Activated CD4-positive, alpha-beta T cell treated with anti-CD3 and anti-CD28 coated beads, Interleukin-2, amount 10 ng/mL, durations not matched to agents 24 days and 14 days (primary cell): ENCODE measurements at regions of chrX and their contacts with region 1.

Region 1: DNA sequence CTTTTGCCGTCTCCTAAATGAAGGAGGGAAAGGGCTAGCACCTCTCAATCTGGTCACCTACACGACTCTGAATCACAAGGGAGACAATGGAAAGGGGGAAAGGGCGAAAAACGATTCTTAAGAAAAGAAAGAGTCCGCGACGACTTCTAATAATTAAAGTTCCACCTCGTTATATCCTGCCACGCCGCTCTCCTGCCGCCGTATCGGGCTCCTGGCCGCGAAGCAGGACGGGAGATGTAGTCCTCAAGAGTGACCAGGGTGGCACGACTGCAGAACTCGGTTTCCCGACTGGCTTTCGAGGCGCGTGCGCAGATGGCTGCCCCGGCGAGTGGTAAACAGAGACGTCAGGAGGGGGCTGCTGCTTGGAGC is at the start of gene FOXO4:
- DNase-seq: peak; percentile 96
- H3K4me3 Mint-ChIP-seq: peak within 1 kb of the TSS; percentile 89
- H3K27ac Mint-ChIP-seq: peak within 1 kb of the TSS; percentile 96
- H3K4me1 Mint-ChIP-seq: peaks cover 27% of the 10 kb centered on the region
- H3K27me3 Mint-ChIP-seq: no peaks in the 10 kb centered on the region
- total RNA-seq, gene FOXO4: 9.4 and 9.8 TPM in 2 replicates

Region 2: GRCh38 chrX:70852303-70852702 is 243.2 kb before region 1 on chrX:
- intact Hi-C with region 1: no loop called
- DNase-seq: no peak
- H3K4me3 Mint-ChIP-seq: no peak overlapping the region
- H3K27ac Mint-ChIP-seq: no peak overlapping the region
- H3K4me1 Mint-ChIP-seq: no peaks in the 10 kb centered on the region
- H3K27me3 Mint-ChIP-seq: no peaks in the 10 kb centered on the region

Region 3: DNA sequence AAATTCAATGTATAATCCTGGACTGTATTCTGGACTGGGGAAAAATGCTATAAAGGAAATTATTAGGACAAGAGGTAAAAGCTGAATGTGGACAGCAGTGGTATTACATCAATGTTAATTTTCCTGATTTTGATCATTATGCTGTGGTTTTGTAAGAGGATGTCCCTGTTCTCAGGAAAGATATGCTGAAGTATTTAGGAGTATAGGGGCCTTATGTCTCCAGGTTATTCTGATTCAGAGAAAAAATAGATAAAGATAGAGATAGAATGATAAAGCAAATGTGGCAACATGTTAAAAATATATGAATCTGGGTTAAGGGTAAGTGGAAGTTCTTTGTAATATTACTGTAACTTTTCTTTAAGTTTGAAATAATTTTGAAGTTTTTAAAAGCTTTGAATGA is 63.0 kb before region 1 on chrX:
- intact Hi-C with region 1: no loop called
- DNase-seq: no peak
- H3K4me3 Mint-ChIP-seq: no peak overlapping the region
- H3K27ac Mint-ChIP-seq: no peak overlapping the region
- H3K4me1 Mint-ChIP-seq: no peaks in the 10 kb centered on the region
- H3K27me3 Mint-ChIP-seq: no peaks in the 10 kb centered on the region

Region 4: DNA sequence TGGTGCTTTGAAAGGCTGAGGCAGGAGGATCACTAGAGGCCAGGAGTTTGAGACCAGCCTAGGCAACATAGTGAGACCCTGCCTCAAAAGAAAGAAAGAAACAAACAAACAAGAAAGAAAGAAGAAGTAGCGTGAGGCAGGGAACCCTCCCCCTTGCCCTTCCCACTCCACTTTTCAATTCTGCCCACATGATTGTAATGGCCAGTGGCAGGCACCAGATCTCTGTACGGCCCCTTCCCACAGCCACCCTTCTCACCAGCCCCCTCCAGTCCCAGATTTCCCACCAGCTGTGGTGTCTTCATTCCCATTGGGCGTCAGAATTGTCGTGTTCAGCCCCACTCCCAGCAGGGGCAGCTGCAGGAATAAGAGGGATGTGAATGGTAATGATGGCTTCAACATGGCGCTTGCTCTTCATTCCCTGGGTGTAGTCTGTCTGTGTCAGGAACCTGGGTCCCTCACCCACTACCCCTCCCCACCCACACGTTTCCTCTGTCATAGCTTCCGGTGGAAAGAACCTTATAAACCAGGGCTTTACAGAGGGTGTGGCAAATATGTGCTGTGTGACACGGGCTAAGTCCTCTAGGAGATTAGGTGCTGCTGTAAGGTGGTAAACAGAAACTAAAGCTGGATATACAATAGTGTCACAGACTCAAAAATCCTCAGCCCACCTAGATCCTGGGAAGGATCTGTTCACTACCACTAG is 15.8 kb after region 1 on chrX and contains the start of gene IL2RG:
- intact Hi-C with region 1: loop called (anchors 2 kb)
- DNase-seq: peak; percentile 93
- H3K4me3 Mint-ChIP-seq: peak within 1 kb of the TSS; percentile 100
- H3K27ac Mint-ChIP-seq: peak within 1 kb of the TSS; percentile 95
- H3K4me1 Mint-ChIP-seq: peaks cover 31% of the 10 kb centered on the region
- H3K27me3 Mint-ChIP-seq: no peaks in the 10 kb centered on the region
- total RNA-seq, gene IL2RG: 337 and 348 TPM in 2 replicates

Region 5: GRCh38 chrX:71128915-71129765 is 33.6 kb after region 1 on chrX:
- intact Hi-C with region 1: loop called (anchors 1 kb)
- DNase-seq: peak; percentile 92
- H3K4me3 Mint-ChIP-seq: peak overlapping the region; percentile 59
- H3K27ac Mint-ChIP-seq: peak overlapping the region; percentile 80
- H3K4me1 Mint-ChIP-seq: peaks cover 16% of the 10 kb centered on the region
- H3K27me3 Mint-ChIP-seq: no peaks in the 10 kb centered on the region

Region 6: DNA sequence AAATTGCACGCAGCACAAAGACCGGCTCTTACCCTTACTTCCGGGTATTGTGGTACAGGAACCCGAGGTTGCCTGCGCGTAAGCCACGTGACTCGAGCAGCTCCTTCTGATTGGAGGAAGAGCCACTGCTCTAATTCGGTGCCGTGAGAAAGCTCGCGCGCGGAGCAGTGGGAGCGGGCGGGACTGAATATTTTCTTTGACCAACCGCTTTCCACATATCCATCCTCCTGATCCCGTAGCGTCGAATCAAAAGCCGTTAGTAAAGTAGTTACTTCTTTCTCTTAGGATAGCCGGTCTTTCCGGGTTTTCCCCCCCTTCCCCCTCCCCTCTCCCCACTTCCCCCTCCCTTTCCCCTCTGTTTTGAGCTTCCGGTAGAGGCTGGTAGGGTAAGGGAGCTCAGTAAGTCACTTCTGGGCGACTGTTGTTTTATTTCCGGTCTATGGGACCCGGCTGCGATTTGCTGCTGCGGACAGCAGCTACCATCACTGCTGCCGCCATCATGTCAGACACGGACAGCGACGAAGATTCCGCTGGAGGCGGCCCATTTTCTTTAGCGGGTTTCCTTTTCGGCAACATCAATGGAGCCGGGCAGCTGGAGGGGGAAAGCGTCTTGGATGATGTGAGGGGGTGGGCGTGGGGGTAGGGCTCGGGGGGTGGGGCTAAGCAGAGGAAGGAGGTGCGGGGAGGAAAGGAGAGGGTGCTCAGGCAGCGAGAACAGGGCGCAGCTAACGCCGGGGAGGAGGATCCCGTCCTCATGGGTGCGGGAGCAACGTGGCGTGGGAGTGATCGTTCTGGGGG is 270.5 kb after region 1 on chrX and contains the start of gene TAF1:
- intact Hi-C with region 1: loop called (anchors 1 kb)
- DNase-seq: peak; percentile 96
- H3K4me3 Mint-ChIP-seq: peak within 1 kb of the TSS; percentile 98
- H3K27ac Mint-ChIP-seq: peak within 1 kb of the TSS; percentile 100
- H3K4me1 Mint-ChIP-seq: peaks cover 21% of the 10 kb centered on the region
- H3K27me3 Mint-ChIP-seq: no peaks in the 10 kb centered on the region
- total RNA-seq, gene TAF1: 46.7 and 47.8 TPM in 2 replicates